MCF 10A (cell line): ENCODE measurements at regions of chr6 and their contacts with region 1.

Region 1: GRCh38 chr6:154276810-154277628 is 79.6 kb downstream of the IPCEF1 start:
- DNase-seq: peak; percentile 56
- H3K4me3 Mint-ChIP-seq: peak overlapping the region; percentile 44
- H3K27ac Mint-ChIP-seq: no peak overlapping the region
- H3K4me1 Mint-ChIP-seq: peaks cover 6% of the 10 kb centered on the region
- H3K27me3 Mint-ChIP-seq: no peaks in the 10 kb centered on the region
- CTCF ChIP-seq: peak; percentile 40

Region 2: DNA sequence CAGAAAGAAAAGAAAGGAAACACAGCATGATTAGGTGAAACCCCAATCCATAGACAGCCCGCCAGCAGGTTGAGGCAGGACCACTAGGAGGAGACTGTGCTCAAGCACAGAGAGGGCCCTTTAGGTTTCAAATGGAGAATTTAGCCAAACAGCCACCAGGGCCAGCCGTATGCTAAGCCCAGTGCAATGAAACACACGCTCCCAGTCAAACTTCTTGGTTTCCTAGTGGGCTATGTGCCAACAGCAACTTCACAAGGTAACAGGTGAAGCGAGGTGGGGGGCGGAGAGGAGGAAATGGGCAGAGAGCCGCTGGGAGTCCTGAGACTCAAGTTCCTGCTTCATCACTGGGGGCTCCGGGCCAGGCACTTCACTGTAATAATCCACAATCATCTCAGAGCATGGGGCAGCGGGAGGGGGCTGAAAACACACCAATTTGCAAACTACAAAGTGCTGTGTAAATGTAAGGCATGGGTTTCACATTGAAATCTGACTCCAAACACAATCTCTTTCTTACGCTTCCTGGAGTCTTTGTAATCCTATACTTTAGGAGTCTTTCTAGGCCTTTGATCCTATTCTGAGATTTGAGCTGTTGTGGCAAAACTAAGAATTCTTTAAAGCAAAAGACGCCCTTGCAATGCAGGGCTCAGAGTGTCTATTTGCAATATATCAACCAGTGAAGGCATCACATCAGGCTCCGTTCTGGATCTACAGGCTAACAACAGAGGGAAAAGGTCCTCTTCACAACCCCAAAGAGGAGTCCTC is 120.7 kb before region 1 on chr6:
- CTCF ChIA-PET with region 1: interaction called, 160 read pairs
- POLR2A ChIA-PET with region 1: interaction called, 8 read pairs
- intact Hi-C with region 1: loop called (anchors 1 kb)
- DNase-seq: peak; percentile 57
- H3K4me3 Mint-ChIP-seq: no peak overlapping the region
- H3K27ac Mint-ChIP-seq: no peak overlapping the region
- H3K4me1 Mint-ChIP-seq: peaks cover 4% of the 10 kb centered on the region
- H3K27me3 Mint-ChIP-seq: no peaks in the 10 kb centered on the region
- CTCF ChIP-seq: peak; percentile 51

Region 3: DNA sequence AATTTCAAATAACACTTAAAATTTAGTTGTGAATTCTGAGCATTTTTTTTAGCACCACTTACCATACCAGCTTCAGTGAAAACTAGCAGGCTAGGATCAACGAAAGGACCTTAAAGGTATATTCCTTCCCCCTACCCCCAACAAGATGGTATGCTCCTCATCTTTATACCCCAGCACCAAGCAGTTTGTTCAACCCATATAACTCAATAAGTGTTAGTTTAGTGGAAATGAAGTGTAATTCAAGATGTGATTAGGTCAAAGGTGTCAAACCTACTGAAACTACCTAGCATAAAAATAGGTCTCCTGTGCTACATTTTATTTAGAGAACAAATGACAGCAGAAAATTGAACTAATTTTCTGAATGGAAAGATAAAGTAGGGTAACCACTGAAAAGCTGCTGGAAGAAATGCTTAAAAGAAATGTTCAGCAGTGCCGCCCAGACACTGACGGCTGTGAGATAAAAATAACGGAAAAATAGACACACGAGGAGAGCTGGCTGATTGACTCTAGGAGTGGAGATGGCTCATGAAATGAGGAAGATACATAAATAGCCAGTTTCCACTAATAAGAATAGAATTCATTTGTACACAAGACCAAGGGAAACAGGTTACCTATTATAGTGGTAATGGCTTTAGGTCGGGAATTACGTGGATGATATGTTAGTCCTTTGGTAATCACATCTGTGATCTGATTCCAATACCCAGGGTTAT is 15.2 kb before region 1 on chr6:
- CTCF ChIA-PET with region 1: interaction called, 12 read pairs
- POLR2A ChIA-PET with region 1: no interaction called
- intact Hi-C with region 1: no loop called
- DNase-seq: no peak
- H3K4me3 Mint-ChIP-seq: no peak overlapping the region
- H3K27ac Mint-ChIP-seq: no peak overlapping the region
- H3K4me1 Mint-ChIP-seq: no peaks in the 10 kb centered on the region
- H3K27me3 Mint-ChIP-seq: no peaks in the 10 kb centered on the region
- CTCF ChIP-seq: no peak

Region 4: GRCh38 chr6:154457881-154458284 is 180.9 kb after region 1 on chr6:
- CTCF ChIA-PET with region 1: interaction called, 26 read pairs
- POLR2A ChIA-PET with region 1: no interaction called
- intact Hi-C with region 1: loop called (anchors 1 kb)
- DNase-seq: peak; percentile 58
- H3K4me3 Mint-ChIP-seq: no peak overlapping the region
- H3K27ac Mint-ChIP-seq: no peak overlapping the region
- H3K4me1 Mint-ChIP-seq: peaks cover 33% of the 10 kb centered on the region
- H3K27me3 Mint-ChIP-seq: no peaks in the 10 kb centered on the region
- CTCF ChIP-seq: no peak